ENCODE measurements at regions of chr12 and their contacts with region 1.

Region 1: GRCh38 chr12:71663561-71664294 is at the start of gene ZFC3H1:
- DNase-seq: peak; percentile 94
- ATAC-seq: peak; percentile 98
- H3K4me3 ChIP-seq: peak within 1 kb of the TSS; percentile 97 to 98
- H3K27ac ChIP-seq: peak within 1 kb of the TSS; percentile 99
- H3K4me1 ChIP-seq: peaks cover 15% of the 10 kb centered on the region; the same call in 1 of the 2 replicates
- H3K27me3 ChIP-seq: no peaks in the 10 kb centered on the region
- CTCF ChIP-seq: peak; percentile 52
- total RNA-seq, gene ZFC3H1: 38.2 TPM

Region 2: DNA sequence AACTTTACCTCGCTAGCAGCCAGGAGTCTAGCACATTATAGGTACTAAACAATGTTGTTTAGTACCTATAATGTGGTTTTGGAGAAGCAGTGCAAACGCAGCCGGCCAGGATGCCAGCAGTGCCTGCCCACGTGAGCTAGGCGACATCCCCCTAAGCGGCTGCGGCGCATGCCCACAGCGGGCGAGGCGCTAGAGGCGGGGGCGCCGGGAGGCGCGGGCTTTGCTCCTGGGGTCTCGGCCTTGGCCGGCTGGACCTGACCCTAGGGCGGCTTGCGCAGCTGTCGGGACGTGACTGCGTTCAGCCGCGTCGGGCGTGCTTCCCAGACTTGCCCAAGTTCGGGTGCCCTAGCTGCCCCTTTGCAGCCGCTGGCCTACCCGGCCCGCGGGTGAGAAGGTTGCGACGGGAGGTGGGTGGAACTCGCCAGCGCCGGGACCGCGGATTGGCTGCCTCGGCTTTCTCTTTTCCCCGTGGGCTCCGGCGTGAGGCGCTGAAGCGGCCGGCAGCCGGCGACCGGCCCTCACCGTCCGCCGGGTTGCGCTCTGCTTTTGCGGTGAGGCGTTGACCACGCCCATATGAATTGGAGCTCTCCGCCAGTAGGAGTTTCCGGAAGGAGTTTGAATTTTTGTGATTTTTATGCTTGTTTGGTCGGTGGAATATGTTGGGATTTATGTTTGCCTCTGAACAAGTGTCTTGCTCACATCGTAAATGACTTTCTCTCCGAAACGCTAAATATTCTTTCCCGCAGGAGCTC is 22.4 kb after region 1 on chr12 and contains the start of gene TMEM19:
- CTCF ChIA-PET with region 1: no interaction called
- POLR2A ChIA-PET with region 1: interaction called, 16 read pairs
- in situ Hi-C with region 1: no loop called
- intact Hi-C with region 1: no loop called
- DNase-seq: no peak
- ATAC-seq: peak; percentile 98
- H3K4me3 ChIP-seq: peak within 1 kb of the TSS; percentile 76
- H3K27ac ChIP-seq: peak within 1 kb of the TSS; percentile 96
- H3K4me1 ChIP-seq: peaks cover 10% of the 10 kb centered on the region
- H3K27me3 ChIP-seq: no peaks in the 10 kb centered on the region
- CTCF ChIP-seq: peak; percentile 68
- total RNA-seq, gene TMEM19: 72.8 TPM

Measured in Panc1 (cell line).